ENCODE measurements at regions of chr17 and their contacts with region 1.

Region 1: GRCh38 chr17:59366773-59367657 is 35.6 kb downstream of the YPEL2 start:
- DNase-seq: peak; percentile 98
- ATAC-seq: peak; percentile 90
- H3K4me3 ChIP-seq: peak overlapping the region; percentile 24 to 62 (median 41)
- H3K27ac ChIP-seq: peak overlapping the region; percentile 76
- H3K4me1 ChIP-seq: peaks cover 83% of the 10 kb centered on the region
- H3K27me3 ChIP-seq: no peaks in the 10 kb centered on the region
- CTCF ChIP-seq: peak; percentile 25; the same call in 1 of the 2 replicates
- EP300 ChIP-seq: peak in 1 of 2 experiments; percentile 98; a peak in 2 of 4 replicates
- POLR2A ChIP-seq: no peak
- RAD21 ChIP-seq: no peak

Region 2: GRCh38 chr17:59331129-59331928 is 35.7 kb before region 1 on chr17 and contains the start of gene YPEL2:
- CTCF ChIA-PET with region 1: no interaction called
- POLR2A ChIA-PET with region 1: interaction called, 17 read pairs
- in situ Hi-C with region 1: loop called (anchors 5 kb)
- intact Hi-C with region 1: loop called (anchors 1 kb)
- DNase-seq: peak; percentile 92
- ATAC-seq: peak; percentile 95
- H3K4me3 ChIP-seq: peak within 1 kb of the TSS; percentile 78 to 91 (median 91)
- H3K27ac ChIP-seq: peak within 1 kb of the TSS; percentile 79
- H3K4me1 ChIP-seq: peaks cover 77% of the 10 kb centered on the region
- H3K27me3 ChIP-seq: no peaks in the 10 kb centered on the region; a peak in 1 of 5 replicates
- CTCF ChIP-seq: no peak
- EP300 ChIP-seq: peak in 1 of 2 experiments; percentile 64; a peak in 2 of 4 replicates
- POLR2A ChIP-seq: peak in 1 of 2 experiments; percentile 63; a peak in 2 of 4 replicates
- RAD21 ChIP-seq: peak; percentile 41
- total RNA-seq, gene YPEL2: 7.5 and 8.5 TPM in 2 replicates

Region 3: GRCh38 chr17:59347975-59348391 is 19.0 kb before region 1 on chr17:
- CTCF ChIA-PET with region 1: no interaction called
- POLR2A ChIA-PET with region 1: interaction called, 4 read pairs
- in situ Hi-C with region 1: no loop called
- intact Hi-C with region 1: loop called (anchors 1 kb)
- DNase-seq: no peak
- ATAC-seq: no peak
- H3K4me3 ChIP-seq: no peak overlapping the region
- H3K27ac ChIP-seq: no peak overlapping the region
- H3K4me1 ChIP-seq: peaks cover 45% of the 10 kb centered on the region
- H3K27me3 ChIP-seq: no peaks in the 10 kb centered on the region
- CTCF ChIP-seq: no peak
- EP300 ChIP-seq: no peak
- POLR2A ChIP-seq: no peak
- RAD21 ChIP-seq: no peak

Region 4: DNA sequence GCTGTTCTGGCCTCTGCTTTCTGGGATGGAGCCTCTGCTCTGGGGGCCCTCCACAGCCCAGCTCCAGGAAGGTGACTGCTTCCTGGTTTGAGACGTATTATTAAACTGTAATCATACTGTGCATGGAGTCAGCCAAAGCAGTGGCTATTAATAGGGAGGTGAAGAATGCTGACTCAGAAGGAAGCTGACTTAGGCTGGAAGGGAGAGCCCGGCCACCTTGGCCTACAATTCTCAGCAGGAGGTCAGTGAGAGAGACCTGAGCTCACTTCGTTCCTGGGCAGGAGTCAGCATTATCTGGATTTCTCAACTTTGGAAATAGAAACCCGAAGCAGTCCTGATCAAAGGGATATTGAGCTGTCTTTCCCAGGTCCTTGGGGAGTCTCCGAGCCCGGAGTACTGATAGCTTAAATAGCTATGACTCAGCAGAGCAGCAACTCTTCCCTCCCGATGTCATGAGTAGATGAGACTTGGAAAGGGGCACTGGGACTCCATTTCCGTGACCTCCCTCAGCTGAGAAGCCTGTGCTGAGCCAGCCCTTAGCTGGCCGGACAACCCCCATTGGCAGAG is 56.2 kb after region 1 on chr17:
- CTCF ChIA-PET with region 1: no interaction called
- POLR2A ChIA-PET with region 1: interaction called, 9 read pairs
- in situ Hi-C with region 1: loop called (anchors 5 kb)
- intact Hi-C with region 1: loop called (anchors 1 kb)
- DNase-seq: peak; percentile 55
- ATAC-seq: peak; percentile 42
- H3K4me3 ChIP-seq: peak overlapping the region; percentile 36 to 54 (median 39)
- H3K27ac ChIP-seq: no peak overlapping the region
- H3K4me1 ChIP-seq: peaks cover 95% of the 10 kb centered on the region
- H3K27me3 ChIP-seq: peaks cover 0 to 3% of the 10 kb centered on the region in 2 experiments; a peak in 1 of 5 replicates
- CTCF ChIP-seq: no peak
- EP300 ChIP-seq: no peak
- POLR2A ChIP-seq: no peak
- RAD21 ChIP-seq: no peak

Region 5: GRCh38 chr17:59428896-59429485 is 62.0 kb after region 1 on chr17:
- CTCF ChIA-PET with region 1: no interaction called
- POLR2A ChIA-PET with region 1: interaction called, 9 read pairs
- in situ Hi-C with region 1: loop called (anchors 5 kb)
- intact Hi-C with region 1: loop called (anchors 2 kb)
- DNase-seq: no peak
- ATAC-seq: no peak
- H3K4me3 ChIP-seq: no peak overlapping the region
- H3K27ac ChIP-seq: no peak overlapping the region
- H3K4me1 ChIP-seq: peaks cover 95% of the 10 kb centered on the region
- H3K27me3 ChIP-seq: no peaks in the 10 kb centered on the region; a peak in 1 of 5 replicates
- CTCF ChIP-seq: no peak
- EP300 ChIP-seq: no peak
- POLR2A ChIP-seq: no peak
- RAD21 ChIP-seq: no peak

Region 6: GRCh38 chr17:59440784-59441441 is 73.9 kb after region 1 on chr17:
- CTCF ChIA-PET with region 1: interaction called, 4 read pairs
- POLR2A ChIA-PET with region 1: no interaction called
- in situ Hi-C with region 1: no loop called
- intact Hi-C with region 1: loop called (anchors 1 kb)
- DNase-seq: peak; percentile 88
- ATAC-seq: peak; percentile 98
- H3K4me3 ChIP-seq: peak overlapping the region in 1 of 3 experiments; percentile 5; a peak in 1 of 6 replicates
- H3K27ac ChIP-seq: no peak overlapping the region
- H3K4me1 ChIP-seq: peaks cover 42% of the 10 kb centered on the region
- H3K27me3 ChIP-seq: no peaks in the 10 kb centered on the region; a peak in 1 of 5 replicates
- CTCF ChIP-seq: peak; percentile 97
- EP300 ChIP-seq: no peak
- POLR2A ChIP-seq: no peak
- RAD21 ChIP-seq: peak; percentile 95

Region 7: DNA sequence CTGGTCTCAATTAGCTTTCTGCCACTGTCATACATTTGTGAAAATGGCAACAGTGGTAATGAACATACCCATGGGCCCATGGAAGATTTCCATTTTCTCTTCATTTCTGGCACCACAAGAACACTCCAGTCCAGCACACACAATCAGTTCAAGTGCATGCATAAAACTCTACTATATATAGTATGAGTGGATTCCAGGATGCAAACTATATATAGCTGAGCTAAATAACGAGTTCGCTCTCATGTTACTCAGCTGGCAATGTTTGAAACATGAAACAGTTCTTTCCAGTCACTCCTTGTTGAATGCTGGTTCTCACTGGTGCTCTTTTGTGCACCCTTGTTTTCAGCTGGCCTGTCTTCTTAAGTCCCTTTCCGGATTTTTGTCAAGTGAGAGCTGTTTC is 123.2 kb after region 1 on chr17:
- CTCF ChIA-PET with region 1: no interaction called
- POLR2A ChIA-PET with region 1: no interaction called
- in situ Hi-C with region 1: no loop called
- intact Hi-C with region 1: no loop called
- DNase-seq: no peak
- ATAC-seq: no peak
- H3K4me3 ChIP-seq: no peak overlapping the region
- H3K27ac ChIP-seq: no peak overlapping the region
- H3K4me1 ChIP-seq: peaks cover 24% of the 10 kb centered on the region
- H3K27me3 ChIP-seq: peaks cover 2 to 15% of the 10 kb centered on the region in 2 experiments; a peak in 4 of 5 replicates
- CTCF ChIP-seq: no peak
- EP300 ChIP-seq: no peak
- POLR2A ChIP-seq: no peak
- RAD21 ChIP-seq: no peak

Region 8: GRCh38 chr17:59534598-59534997 is 167.6 kb after region 1 on chr17:
- CTCF ChIA-PET with region 1: no interaction called
- POLR2A ChIA-PET with region 1: no interaction called
- in situ Hi-C with region 1: no loop called
- intact Hi-C with region 1: no loop called
- DNase-seq: peak; percentile 23
- ATAC-seq: peak; percentile 48; the same call in 1 of the 3 replicates
- H3K4me3 ChIP-seq: no peak overlapping the region
- H3K27ac ChIP-seq: no peak overlapping the region
- H3K4me1 ChIP-seq: no peaks in the 10 kb centered on the region
- H3K27me3 ChIP-seq: no peaks in the 10 kb centered on the region
- CTCF ChIP-seq: no peak
- EP300 ChIP-seq: no peak
- POLR2A ChIP-seq: no peak
- RAD21 ChIP-seq: no peak

Measured in HepG2 (cell line).